Calu3 (cell line): ENCODE measurements at regions of chr10 and their contacts with region 1.

Region 1: GRCh38 chr10:28381903-28382347 is 79.1 kb upstream of the MPP7 start:
- DNase-seq: peak; percentile 85
- H3K4me3 Mint-ChIP-seq: no peak overlapping the region
- H3K27ac Mint-ChIP-seq: no peak overlapping the region
- H3K4me1 Mint-ChIP-seq: peaks cover 5% of the 10 kb centered on the region
- H3K27me3 Mint-ChIP-seq: peaks cover 31% of the 10 kb centered on the region
- CTCF ChIP-seq: peak; percentile 82

Region 2: DNA sequence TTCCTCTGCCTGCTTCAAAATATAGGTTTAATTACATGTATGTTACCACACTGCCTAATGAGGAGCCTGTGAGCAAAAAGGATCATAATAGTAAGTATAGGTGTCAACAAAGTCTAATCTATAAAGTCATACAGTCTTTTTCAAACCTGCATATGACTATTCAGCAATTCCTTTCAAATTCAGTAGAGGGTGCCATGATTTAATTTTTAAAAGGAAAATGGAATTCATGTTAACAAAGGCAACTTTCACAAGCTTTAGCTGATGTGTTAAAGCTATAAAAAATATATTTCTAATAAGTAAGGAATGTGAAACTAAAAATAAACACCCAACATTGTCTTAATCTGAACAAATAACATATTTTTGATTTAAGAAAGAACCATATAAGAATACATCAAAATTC is 131.1 kb before region 1 on chr10:
- CTCF ChIA-PET with region 1: interaction called, 11 read pairs
- intact Hi-C with region 1: loop called (anchors 1 kb)
- DNase-seq: no peak
- H3K4me3 Mint-ChIP-seq: no peak overlapping the region
- H3K27ac Mint-ChIP-seq: no peak overlapping the region
- H3K4me1 Mint-ChIP-seq: no peaks in the 10 kb centered on the region
- H3K27me3 Mint-ChIP-seq: no peaks in the 10 kb centered on the region
- CTCF ChIP-seq: peak; percentile 24